A549 (cell line): ENCODE measurements at regions of chr16 and their contacts with region 1.

Region 1: DNA sequence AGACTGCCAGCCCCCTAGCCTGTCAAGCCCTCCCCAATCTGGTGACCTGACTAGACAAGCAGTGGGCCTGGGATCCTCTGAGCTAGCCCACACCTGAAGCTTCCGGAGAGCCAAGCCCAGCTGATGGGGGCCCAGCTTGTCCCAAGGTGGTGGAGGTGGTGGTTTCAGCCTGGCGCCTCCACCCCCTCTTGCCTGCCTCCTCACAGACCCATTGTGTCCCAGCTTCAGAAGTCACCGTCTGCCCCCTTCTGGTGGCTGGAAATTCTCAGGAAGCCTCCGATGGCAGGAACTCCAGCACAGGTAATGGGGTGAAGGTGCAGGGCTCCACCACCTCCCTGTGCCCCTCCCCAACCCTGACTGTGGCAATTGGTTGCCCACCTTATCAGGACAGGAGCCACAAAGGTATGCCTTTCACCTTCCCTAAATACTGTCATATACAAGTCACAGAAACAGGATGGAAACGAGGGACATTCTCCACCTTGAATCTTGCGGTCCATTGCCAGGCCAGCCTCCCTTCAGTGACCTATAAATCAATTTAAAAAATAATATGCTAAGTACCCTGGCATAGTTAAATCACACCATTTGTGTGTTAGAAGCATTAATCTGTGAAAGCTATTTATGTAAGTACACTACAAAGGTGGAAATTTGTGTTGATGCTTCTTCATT is 66.0 kb upstream of the ZNF423 start:
- DNase-seq: peak; percentile 66
- ATAC-seq: peak; percentile 83 to 90
- H3K4me3 ChIP-seq: no peak overlapping the region
- H3K27ac ChIP-seq: no peak overlapping the region
- H3K4me1 ChIP-seq: no peaks in the 10 kb centered on the region
- CTCF ChIP-seq: peak; percentile 60
- EP300 ChIP-seq: no peak
- POLR2A ChIP-seq: no peak
- RAD21 ChIP-seq: peak; percentile 72 to 85

Region 2: DNA sequence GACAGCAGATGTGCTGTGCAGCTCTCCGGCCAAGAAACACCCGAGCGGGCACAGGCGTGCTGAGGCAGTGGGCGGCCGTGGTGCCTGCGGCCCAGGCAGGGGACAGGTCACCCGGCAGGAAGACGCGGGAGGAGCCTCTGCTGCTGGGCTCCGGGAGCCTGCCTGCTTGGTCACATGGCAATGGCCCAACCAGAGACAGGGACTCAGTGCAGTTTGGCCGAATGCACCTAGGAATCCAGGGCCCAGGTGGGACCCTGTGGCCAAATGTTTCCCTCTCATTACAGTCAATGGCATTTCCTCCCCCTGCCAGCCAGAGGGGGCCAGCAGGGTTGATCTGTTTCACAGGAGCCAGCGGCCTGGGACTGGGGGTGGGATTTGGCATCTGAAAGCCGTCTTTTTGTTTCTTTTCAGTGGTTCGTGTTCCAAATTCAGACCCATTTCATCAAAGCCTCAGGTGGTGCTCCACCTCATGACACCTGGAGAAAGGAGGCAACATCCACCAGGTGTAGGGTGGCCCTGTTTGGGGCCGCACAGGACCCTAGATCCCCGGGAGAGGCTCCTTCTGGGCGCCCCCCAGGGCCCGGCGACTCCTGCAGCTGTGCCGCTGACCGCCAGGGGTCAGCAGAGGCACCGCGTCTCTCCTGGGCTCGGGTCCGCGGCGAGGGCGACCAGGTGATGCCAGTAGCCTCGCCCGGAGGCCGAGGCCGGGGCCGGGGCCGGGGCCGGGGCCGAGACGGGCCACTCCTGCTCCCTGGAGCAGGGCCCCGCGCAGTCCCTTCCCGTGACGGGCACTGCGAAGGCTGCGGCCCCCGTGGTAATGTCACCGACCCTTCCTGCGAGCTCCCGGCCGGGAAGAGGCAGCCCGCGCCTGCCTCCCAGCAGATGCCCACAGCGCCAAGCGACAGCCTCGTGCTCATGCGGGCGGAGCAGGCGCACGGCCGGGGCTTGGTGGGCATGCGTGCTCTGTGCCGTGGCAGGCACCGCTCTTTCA is 429.9 kb before region 1 on chr16:
- CTCF ChIA-PET with region 1: interaction called, 14 read pairs
- POLR2A ChIA-PET with region 1: no interaction called
- DNase-seq: peak; percentile 15 to 68
- ATAC-seq: peak; percentile 77 to 94
- H3K4me3 ChIP-seq: peak overlapping the region; percentile 32; the same call in 2 of the 3 replicates
- H3K27ac ChIP-seq: no peak overlapping the region
- H3K4me1 ChIP-seq: no peaks in the 10 kb centered on the region
- CTCF ChIP-seq: peak; percentile 91
- EP300 ChIP-seq: no peak
- POLR2A ChIP-seq: no peak
- RAD21 ChIP-seq: peak; percentile 46 to 60

Region 3: DNA sequence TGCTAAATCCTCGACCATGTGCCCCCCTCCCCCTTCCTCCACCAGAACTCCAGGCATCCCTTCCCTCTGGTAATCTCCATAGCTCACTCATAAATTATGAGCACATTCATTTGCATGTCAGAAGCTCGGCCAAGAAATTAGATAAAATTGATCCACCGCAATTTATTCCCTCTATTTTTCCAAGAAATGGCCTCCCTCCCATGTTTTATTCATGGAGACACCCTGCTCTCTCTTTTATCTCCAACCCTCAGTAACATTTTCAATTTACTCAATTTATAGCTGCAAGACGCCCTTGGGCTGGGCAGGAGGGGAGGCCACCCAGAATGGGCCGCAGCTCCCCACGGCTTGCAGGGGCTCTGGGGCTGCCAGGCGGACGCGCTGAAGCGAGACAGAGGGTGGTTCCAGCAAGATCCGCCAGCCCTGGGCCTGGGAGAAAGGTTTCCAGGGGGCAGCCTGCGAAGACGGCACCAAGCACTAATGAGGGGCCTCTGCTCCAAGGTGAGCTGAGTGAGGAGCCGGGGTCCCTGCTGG is 11.3 kb before region 1 on chr16:
- CTCF ChIA-PET with region 1: interaction called, 15 read pairs
- POLR2A ChIA-PET with region 1: no interaction called
- DNase-seq: no peak
- ATAC-seq: no peak
- H3K4me3 ChIP-seq: no peak overlapping the region
- H3K27ac ChIP-seq: no peak overlapping the region
- H3K4me1 ChIP-seq: no peaks in the 10 kb centered on the region
- CTCF ChIP-seq: no peak
- EP300 ChIP-seq: no peak
- POLR2A ChIP-seq: no peak
- RAD21 ChIP-seq: no peak

Region 4: DNA sequence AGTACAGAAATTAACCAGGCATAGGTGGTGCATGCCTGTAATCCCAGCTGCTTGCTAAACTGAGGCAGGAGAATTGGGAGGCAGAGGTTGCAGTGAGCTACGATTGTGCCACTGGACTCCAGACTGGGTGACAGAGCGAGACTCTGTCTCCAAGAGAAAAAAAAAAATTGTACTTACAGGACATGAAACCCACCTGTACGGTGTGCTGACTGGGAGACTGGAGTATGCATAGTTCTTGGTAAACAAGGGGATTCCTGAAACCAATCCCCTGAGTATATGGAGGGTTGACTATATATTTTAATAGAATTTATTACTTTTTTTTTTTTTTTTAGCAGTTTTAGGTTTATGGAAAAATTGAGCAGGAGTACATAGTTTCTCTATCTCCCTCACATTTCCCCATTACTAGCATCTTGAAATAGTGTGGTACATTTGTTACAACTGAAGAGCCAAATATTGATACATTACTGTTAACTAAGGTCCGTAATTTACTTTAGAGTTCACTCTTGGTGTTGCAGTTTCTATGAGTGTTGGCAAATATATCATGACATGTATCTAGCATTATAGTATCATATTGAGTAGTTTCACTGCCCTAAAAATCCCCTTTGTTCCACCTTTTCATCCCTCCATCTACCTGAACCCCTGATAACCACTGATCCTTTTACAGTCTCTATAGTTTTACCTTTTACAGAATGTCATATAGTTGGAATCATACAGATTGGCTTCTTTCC is 250.4 kb after region 1 on chr16:
- CTCF ChIA-PET with region 1: no interaction called
- POLR2A ChIA-PET with region 1: no interaction called
- DNase-seq: no peak
- ATAC-seq: no peak
- H3K4me3 ChIP-seq: no peak overlapping the region
- H3K27ac ChIP-seq: no peak overlapping the region
- H3K4me1 ChIP-seq: peaks cover 19% of the 10 kb centered on the region
- CTCF ChIP-seq: no peak
- EP300 ChIP-seq: no peak
- POLR2A ChIP-seq: no peak
- RAD21 ChIP-seq: no peak